Ascending aorta (tissue), 2 donors: ENCODE measurements at regions of chr10 and their contacts with region 1.

Region 1: GRCh38 chr10:119178372-119179119 is at the start of gene PRDX3:
- DNase-seq: peak; percentile 72 to 95
- H3K4me3 ChIP-seq: peak within 1 kb of the TSS; percentile 66 to 81
- H3K27ac ChIP-seq: peak within 1 kb of the TSS; percentile 72 to 91
- H3K4me1 ChIP-seq: peaks cover 0 to 7% of the 10 kb centered on the region in 2 donors
- H3K27me3 ChIP-seq: no peaks in the 10 kb centered on the region
- CTCF ChIP-seq: peak in 2 of 3 experiments; percentile 13 to 19
- total RNA-seq, gene PRDX3: 34.9 TPM

Region 2: GRCh38 chr10:119253433-119254174 is 75.1 kb after region 1 on chr10:
- intact Hi-C with region 1: no loop called
- DNase-seq: peak; percentile 47 to 90
- H3K4me3 ChIP-seq: peak overlapping the region in 1 of 2 donors; percentile 33
- H3K27ac ChIP-seq: peak overlapping the region; percentile 95 to 97
- H3K4me1 ChIP-seq: peaks cover 27 to 64% of the 10 kb centered on the region in 2 donors
- H3K27me3 ChIP-seq: no peaks in the 10 kb centered on the region
- CTCF ChIP-seq: peak in 2 of 3 experiments; percentile 14 to 17

Region 3: GRCh38 chr10:119542988-119543813 is 364.7 kb after region 1 on chr10:
- intact Hi-C with region 1: loop called (anchors 5 kb)
- DNase-seq: peak in 1 of 2 donors; percentile 71
- H3K4me3 ChIP-seq: peak overlapping the region; percentile 85 to 89
- H3K27ac ChIP-seq: peak overlapping the region; percentile 58 to 79
- H3K4me1 ChIP-seq: peaks cover 0 to 10% of the 10 kb centered on the region in 2 donors
- H3K27me3 ChIP-seq: no peaks in the 10 kb centered on the region
- CTCF ChIP-seq: peak in 2 of 3 experiments; percentile 40 to 66

Region 4: DNA sequence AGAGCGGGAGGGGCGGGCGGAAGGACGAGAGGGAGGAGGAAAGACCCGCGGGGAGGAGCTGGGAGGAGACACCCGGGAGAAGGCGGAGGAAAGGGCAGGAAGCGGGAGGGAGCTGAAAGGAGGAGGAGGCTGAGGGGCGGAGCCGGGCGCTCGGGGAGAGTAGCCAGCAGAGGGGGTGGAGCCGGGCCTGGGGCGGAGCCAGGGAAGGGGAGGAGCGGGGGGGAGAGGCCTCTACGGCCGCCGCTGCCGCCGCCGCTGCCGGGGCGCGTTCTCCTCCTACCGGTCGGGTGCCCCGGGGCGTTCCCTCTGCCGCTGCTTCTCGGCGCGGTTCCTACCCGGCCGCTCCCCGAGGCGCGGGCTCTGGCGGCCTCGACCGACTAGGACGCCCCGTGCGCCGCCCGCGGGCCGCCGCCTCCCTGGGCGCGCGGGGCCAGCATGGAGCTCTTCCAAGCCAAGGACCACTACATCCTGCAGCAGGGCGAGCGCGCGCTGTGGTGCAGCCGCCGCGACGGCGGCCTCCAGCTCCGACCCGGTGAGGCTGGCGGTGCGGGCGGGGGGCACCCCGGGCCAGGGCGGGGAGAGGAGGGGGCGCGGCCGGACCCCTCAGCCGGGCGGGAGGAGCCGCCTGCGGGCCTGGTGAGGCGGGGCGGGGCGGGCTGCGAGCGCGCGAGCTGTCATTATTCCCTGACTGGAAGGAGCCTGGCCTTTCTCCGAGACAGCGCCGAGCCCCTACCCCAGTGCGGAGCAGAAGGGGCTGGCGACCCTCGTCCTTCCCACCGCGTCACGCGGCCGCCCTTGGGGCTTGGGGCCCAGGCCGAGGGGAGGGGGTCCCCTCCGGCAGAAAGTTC is 547.5 kb after region 1 on chr10 and contains the start of gene INPP5F:
- intact Hi-C with region 1: loop called (anchors 2 kb)
- DNase-seq: peak; percentile 94 to 99
- H3K4me3 ChIP-seq: peak within 1 kb of the TSS; percentile 86 to 94
- H3K27ac ChIP-seq: peak within 1 kb of the TSS; percentile 93 to 94
- H3K4me1 ChIP-seq: peaks cover 7 to 14% of the 10 kb centered on the region in 2 donors
- H3K27me3 ChIP-seq: no peaks in the 10 kb centered on the region
- CTCF ChIP-seq: peak; percentile 24 to 49 (median 34)
- total RNA-seq, gene INPP5F: 5.1 TPM